Activated CD4-positive, alpha-beta T cell treated with anti-CD3 and anti-CD28 coated beads, Interleukin-2, amount 10 ng/mL, durations not matched to agents 7 days and 5 days (primary cell): ENCODE measurements at regions of chr3 and their contacts with region 1.

Region 1: DNA sequence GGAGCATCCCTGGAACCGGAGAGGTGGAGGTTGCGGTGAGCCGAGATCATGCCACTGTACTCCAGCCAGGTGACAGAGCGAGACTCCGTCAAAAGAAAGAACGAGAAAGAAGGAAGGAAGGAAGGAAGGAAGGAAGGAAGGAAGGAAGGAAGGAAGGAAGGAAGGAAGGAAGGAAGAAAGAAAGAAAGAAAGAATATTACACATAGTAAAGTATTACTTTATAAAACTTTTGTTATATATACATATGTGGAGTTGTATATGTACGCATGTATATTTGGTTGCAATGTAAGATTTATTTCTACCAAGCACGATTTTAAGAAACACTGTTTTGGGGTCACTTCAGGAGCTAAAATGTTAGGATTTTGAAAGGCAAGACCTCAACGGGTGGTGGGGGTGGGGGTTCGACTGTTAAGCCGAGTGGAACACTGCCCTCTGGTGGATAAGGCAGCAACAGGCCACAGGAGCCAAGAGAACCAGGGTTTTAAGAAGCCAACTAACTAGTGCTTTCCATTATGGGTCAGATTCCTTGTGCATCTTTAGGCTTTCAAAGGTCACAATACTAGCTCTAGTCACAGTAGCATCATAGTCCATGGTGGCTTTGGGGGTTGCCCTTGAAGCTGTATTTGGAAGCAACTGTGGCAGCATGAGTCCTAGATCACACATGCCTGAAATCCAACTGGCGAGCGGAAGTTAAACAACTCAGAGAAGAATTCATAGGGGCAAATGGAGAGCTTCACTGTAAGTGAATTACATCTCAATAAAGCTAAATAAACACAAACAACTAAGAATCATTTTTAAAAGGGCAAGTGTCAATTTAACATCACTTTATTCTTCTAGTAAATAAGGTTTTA is 22.5 kb downstream of the GLB1 start:
- DNase-seq: peak; percentile 79
- H3K4me3 Mint-ChIP-seq: no peak overlapping the region
- H3K27ac Mint-ChIP-seq: no peak overlapping the region
- H3K4me1 Mint-ChIP-seq: peaks cover 54% of the 10 kb centered on the region
- H3K27me3 Mint-ChIP-seq: no peaks in the 10 kb centered on the region

Region 2: DNA sequence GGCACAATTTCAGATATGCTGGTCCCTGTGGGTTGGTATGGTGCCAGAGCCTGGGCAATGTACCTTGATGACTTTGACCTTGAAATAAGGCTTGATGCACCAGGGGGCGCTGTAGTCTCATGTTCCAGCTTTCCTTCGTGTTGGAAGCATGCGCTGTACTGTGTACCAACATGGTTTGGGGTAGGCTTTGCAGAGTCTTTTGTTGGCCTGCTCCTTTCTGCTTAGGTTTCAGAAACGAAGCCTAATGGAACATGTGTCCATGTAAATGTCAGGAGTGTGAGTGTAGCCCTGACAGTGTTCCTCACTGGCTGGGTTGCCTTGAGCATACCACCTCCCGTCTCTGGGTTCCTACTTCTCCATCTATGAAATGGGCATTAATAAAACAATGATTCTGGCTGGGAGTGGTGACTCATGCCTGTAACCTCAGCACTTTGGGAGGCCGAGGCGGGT is 126.6 kb before region 1 on chr3:
- CTCF ChIA-PET with region 1: interaction called, 41 read pairs
- POLR2A ChIA-PET with region 1: no interaction called
- DNase-seq: peak; percentile 95
- H3K4me3 Mint-ChIP-seq: no peak overlapping the region
- H3K27ac Mint-ChIP-seq: no peak overlapping the region
- H3K4me1 Mint-ChIP-seq: peaks cover 46% of the 10 kb centered on the region
- H3K27me3 Mint-ChIP-seq: no peaks in the 10 kb centered on the region

Region 3: DNA sequence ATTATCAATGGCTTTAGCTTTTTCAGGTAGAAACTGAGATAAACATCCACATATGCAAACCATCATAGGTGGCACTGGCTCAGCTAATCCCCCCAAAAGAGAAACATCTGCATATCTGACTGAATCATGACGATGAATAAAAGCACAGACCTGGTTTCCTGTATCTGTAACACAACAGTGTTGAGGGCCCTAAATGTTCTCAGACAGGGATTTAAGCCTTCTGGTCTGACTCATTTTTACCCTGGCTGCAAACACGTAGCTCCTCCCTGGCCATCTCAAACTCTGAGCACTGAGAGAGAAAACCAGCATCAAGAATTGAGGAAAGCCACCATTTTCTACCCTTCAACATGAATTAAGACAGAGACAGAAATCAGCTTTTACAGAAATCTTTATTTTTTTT is 12.7 kb before region 1 on chr3:
- CTCF ChIA-PET with region 1: interaction called, 13 read pairs
- POLR2A ChIA-PET with region 1: no interaction called
- DNase-seq: peak; percentile 54
- H3K4me3 Mint-ChIP-seq: peak overlapping the region; percentile 35
- H3K27ac Mint-ChIP-seq: peak overlapping the region; percentile 93
- H3K4me1 Mint-ChIP-seq: peaks cover 85% of the 10 kb centered on the region
- H3K27me3 Mint-ChIP-seq: no peaks in the 10 kb centered on the region

Region 4: DNA sequence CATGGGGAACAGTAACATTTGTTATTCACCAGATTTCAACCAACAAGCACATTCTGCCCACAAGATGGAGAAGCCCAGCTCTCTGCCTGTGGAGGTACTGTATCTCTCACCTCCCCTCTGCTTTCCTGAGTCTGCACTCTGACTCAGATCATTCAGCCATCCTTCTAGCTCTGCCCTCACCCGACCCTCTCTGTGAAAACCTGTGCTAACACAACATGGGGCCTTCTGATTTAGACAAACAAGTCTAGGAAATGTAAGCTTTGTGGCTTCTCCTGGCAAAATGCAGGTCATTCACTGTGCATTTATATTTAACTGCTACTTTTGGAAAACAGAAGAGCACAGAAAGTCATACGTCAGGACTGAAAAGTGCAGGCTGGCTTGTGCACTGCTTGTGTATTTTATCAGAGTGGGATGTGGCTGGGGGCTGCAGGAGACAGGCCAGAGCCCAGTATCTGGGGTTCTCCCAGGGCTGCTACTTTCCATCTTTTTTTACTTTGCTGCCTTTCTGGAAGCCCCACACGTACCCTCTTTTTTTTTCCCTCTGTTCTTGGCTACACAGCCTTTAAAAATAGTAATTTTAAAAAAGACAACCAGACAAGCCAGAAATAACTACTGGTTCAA is 93.4 kb after region 1 on chr3:
- CTCF ChIA-PET with region 1: no interaction called
- POLR2A ChIA-PET with region 1: no interaction called
- DNase-seq: no peak
- H3K4me3 Mint-ChIP-seq: no peak overlapping the region
- H3K27ac Mint-ChIP-seq: no peak overlapping the region
- H3K4me1 Mint-ChIP-seq: peaks cover 9% of the 10 kb centered on the region
- H3K27me3 Mint-ChIP-seq: peaks cover 8% of the 10 kb centered on the region